ENCODE measurements at regions of chr21 and their contacts with region 1.

Region 1: GRCh38 chr21:41133896-41134522 is 34.0 kb upstream of the BACE2 start:
- DNase-seq: peak in 1 of 14 experiments; percentile 7
- ATAC-seq: no peak
- H3K4me3 ChIP-seq: no peak overlapping the region
- H3K4me3 Mint-ChIP-seq: no peak overlapping the region
- H3K27ac ChIP-seq: no peak overlapping the region
- H3K27ac Mint-ChIP-seq: no peak overlapping the region
- H3K4me1 ChIP-seq: no peaks in the 10 kb centered on the region
- H3K4me1 Mint-ChIP-seq: no peaks in the 10 kb centered on the region
- H3K27me3 ChIP-seq: no peaks in the 10 kb centered on the region
- H3K27me3 Mint-ChIP-seq: peaks cover 9% of the 10 kb centered on the region
- CTCF ChIP-seq: no peak

Region 2: DNA sequence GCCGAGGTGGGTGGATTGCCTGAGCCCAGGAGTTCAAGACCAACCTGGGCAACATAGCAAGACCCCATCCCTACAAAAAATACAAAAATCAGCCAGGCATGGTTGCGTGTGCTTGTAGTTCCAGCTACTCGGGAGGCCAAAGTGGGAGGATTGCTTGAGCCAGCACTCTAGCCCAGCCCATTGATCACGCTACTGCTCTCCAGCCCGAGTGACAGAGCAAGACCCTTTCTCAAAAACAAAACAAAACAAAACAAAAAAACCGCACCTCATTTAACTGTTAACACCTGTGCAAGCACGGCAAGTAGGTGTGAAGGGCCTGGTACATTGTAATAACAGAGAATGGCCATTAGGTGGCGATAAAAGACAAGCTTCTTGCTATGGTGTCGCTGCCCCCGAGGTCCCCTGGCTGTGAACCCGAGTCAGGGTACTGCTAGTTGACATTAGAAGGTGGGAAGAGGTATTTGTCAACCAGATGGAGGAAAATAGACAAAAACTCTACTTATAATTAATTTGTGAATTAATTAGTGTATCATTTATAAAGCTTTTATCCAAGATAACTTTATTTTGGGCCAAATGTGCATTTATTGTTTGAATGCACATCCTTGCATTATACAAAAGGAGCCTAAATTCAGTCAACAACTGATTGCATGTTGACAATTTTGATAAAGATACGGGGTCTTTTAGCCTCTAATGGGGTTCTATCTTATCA is 1615.7 kb before region 1 on chr21:
- CTCF ChIA-PET with region 1: no interaction called
- POLR2A ChIA-PET with region 1: no interaction called
- intact Hi-C with region 1: loop called in 1 of 2 experiments (anchors 10 kb)
- DNase-seq: peak in 12 of 14 experiments; percentile 9 to 71 (median 14)
- ATAC-seq: peak; percentile 41
- H3K4me3 ChIP-seq: no peak overlapping the region
- H3K4me3 Mint-ChIP-seq: no peak overlapping the region
- H3K27ac ChIP-seq: no peak overlapping the region
- H3K27ac Mint-ChIP-seq: no peak overlapping the region
- H3K4me1 ChIP-seq: peaks cover 5% of the 10 kb centered on the region
- H3K4me1 Mint-ChIP-seq: peaks cover 4% of the 10 kb centered on the region
- H3K27me3 ChIP-seq: no peaks in the 10 kb centered on the region
- H3K27me3 Mint-ChIP-seq: peaks cover 5% of the 10 kb centered on the region
- CTCF ChIP-seq: peak; percentile 95